CD4-positive, alpha-beta memory T cell (primary cell): ENCODE measurements at regions of chr5 and their contacts with region 1.

Region 1: DNA sequence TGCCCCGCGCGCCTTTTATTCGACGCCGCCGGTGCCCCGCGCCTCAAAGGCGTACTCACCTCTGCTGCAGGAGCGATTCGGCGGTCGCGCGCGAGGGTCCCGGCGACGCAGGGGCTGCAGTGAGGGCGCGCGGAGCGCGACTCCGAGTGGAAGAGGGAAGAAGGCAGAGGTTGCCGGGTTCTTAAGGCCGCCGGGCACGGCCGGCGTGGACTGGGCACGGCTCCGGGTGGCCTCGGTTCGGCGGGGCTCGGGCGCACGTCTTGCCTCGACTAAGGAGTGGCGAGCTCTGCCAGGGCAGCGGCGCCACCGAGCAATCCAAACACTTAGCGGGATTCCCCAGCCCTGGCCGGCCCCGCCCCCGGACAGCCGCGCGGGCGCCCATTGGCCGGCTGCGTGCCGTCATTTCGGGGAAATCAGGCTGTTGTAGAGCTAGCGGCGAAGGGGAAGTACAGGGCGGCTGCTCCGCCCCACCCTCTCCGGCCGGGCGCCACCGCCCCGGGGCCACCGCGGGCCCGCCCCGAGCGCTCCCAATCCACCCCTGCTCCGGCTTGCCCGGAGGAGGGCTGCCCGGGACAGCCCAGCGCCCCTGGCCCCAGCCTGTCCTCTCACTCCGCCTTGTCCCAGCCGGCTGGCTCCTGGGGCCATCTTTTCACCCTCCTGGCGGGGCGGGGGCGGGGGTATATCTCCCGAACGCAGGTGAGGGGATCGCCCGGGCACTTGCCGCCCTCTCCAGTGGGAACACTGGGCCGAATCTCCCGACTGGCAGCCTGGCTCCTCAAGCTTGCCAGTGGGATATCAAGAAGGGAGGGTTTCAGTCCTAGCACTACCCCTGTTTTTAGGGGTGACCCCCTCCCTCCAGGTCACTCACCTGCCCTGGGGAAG is at the start of gene IRF1:
- DNase-seq: peak; percentile 97 to 99 (median 99)
- H3K4me3 ChIP-seq: peak within 1 kb of the TSS; percentile 94 to 96
- H3K4me3 Mint-ChIP-seq: peak within 1 kb of the TSS; percentile 94 to 97 (median 96)
- H3K27ac ChIP-seq: peak within 1 kb of the TSS; percentile 99
- H3K27ac Mint-ChIP-seq: peak within 1 kb of the TSS; percentile 93 to 99 (median 99)
- H3K4me1 ChIP-seq: peaks cover 79% of the 10 kb centered on the region
- H3K4me1 Mint-ChIP-seq: peaks cover 46 to 83% (median 61%) of the 10 kb centered on the region in 4 donors
- H3K27me3 ChIP-seq: no peaks in the 10 kb centered on the region
- H3K27me3 Mint-ChIP-seq: no peaks in the 10 kb centered on the region
- total RNA-seq, gene IRF1: 192 to 202 TPM

Region 2: GRCh38 chr5:132369474-132370180 is 121.1 kb before region 1 on chr5 and contains the start of gene SLC22A5:
- CTCF ChIA-PET with region 1: interaction called, 7 read pairs
- POLR2A ChIA-PET with region 1: interaction called, 30 read pairs
- intact Hi-C with region 1: no loop called
- DNase-seq: peak; percentile 67 to 77 (median 72)
- H3K4me3 ChIP-seq: peak within 1 kb of the TSS; percentile 20 to 72
- H3K4me3 Mint-ChIP-seq: peak within 1 kb of the TSS; percentile 83 to 91 (median 87)
- H3K27ac ChIP-seq: peak within 1 kb of the TSS; percentile 74
- H3K27ac Mint-ChIP-seq: peak within 1 kb of the TSS; percentile 70 to 93 (median 88)
- H3K4me1 ChIP-seq: peaks cover 31% of the 10 kb centered on the region
- H3K4me1 Mint-ChIP-seq: peaks cover 13 to 32% (median 26%) of the 10 kb centered on the region in 4 donors
- H3K27me3 ChIP-seq: no peaks in the 10 kb centered on the region
- H3K27me3 Mint-ChIP-seq: no peaks in the 10 kb centered on the region
- total RNA-seq, gene SLC22A5: 8.9 to 10.0 TPM

Region 3: GRCh38 chr5:132419502-132420468 is 70.9 kb before region 1 on chr5:
- CTCF ChIA-PET with region 1: interaction called, 94 read pairs
- POLR2A ChIA-PET with region 1: interaction called, 565 read pairs
- intact Hi-C with region 1: loop called (anchors 1 kb)
- DNase-seq: peak; percentile 57 to 69 (median 64)
- H3K4me3 ChIP-seq: peak overlapping the region; percentile 38 to 51
- H3K4me3 Mint-ChIP-seq: peak overlapping the region; percentile 75 to 93 (median 80)
- H3K27ac ChIP-seq: peak overlapping the region; percentile 71
- H3K27ac Mint-ChIP-seq: peak overlapping the region; percentile 96 to 99 (median 97)
- H3K4me1 ChIP-seq: peaks cover 100% of the 10 kb centered on the region
- H3K4me1 Mint-ChIP-seq: peaks cover 76 to 98% (median 86%) of the 10 kb centered on the region in 4 donors
- H3K27me3 ChIP-seq: no peaks in the 10 kb centered on the region
- H3K27me3 Mint-ChIP-seq: no peaks in the 10 kb centered on the region

Region 4: DNA sequence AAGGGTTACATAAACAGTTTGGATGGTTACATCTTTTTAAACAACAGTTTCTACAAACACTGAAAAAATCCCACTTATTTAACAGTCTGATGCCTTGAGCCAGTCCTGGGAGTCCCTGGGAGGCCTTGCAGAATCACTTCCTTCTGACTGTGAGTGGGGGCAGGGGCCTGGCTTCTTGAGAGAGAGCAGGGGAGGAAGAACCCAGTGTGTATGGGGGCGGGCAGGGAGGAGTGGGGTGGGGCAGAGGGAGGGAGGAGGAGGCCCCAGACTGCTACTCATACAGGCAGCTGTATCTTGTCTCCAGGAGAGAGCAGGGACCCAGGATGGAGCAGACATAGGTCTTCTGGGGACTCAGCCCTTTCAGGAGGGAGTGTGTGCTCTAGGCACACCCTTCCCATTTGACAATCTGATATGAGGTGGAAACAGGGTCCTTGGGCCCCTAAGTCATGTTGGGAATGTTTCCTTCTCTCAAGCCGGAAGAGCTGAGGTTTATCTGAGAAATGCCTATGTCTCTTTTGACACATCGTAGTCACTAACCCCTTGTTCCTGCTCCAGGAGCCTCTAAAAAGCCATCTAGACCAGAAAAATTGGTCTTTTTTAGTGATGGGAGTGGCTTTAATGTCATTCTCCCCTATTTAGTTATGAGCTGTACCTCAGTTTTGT is 53.0 kb before region 1 on chr5:
- CTCF ChIA-PET with region 1: interaction called, 8 read pairs
- POLR2A ChIA-PET with region 1: interaction called, 565 read pairs
- intact Hi-C with region 1: no loop called
- DNase-seq: peak; percentile 49 to 75 (median 52)
- H3K4me3 ChIP-seq: peak overlapping the region; percentile 4 to 8
- H3K4me3 Mint-ChIP-seq: peak overlapping the region; percentile 52 to 85 (median 70)
- H3K27ac ChIP-seq: peak overlapping the region; percentile 60
- H3K27ac Mint-ChIP-seq: peak overlapping the region; percentile 89 to 96 (median 92)
- H3K4me1 ChIP-seq: peaks cover 99% of the 10 kb centered on the region
- H3K4me1 Mint-ChIP-seq: peaks cover 64 to 97% (median 83%) of the 10 kb centered on the region in 4 donors
- H3K27me3 ChIP-seq: no peaks in the 10 kb centered on the region
- H3K27me3 Mint-ChIP-seq: no peaks in the 10 kb centered on the region

Region 5: DNA sequence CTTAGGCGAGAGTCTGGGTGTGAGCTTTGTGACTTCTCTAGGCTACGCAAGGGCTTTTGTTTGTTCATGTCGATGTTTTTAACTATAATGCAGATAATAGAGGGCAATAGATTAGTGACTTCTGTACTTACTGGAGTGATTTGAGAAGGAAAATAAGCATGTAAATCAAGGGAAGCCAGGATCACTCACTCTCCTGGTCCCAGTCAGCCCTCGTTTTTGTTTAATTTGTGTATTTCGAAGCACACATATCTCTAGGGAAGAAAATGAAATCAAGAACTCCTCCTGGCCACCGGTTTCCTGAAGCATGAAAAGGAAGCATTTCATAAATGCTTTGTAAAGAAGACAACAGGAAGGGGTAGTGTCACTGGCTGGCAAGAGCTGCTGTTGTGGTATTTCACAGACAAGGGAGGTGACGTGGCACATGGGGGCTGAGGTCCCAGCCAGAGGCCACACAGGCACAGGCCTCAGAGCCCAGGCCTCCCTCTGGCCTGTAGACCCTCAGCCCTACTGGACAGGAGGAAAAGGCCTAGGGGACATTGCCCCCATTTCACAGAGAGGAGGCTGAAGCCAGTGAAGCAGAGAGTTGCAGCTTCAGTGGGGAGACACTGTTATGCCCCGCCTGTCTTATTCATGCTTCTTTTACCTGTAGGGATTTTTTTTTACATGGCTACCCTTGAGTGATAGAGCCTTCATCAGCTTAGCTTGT is 34.3 kb before region 1 on chr5:
- CTCF ChIA-PET with region 1: interaction called, 90 read pairs
- POLR2A ChIA-PET with region 1: interaction called, 1,580 read pairs
- intact Hi-C with region 1: loop called (anchors 1 kb)
- DNase-seq: peak; percentile 76 to 87 (median 79)
- H3K4me3 ChIP-seq: peak overlapping the region; percentile 41 to 48
- H3K4me3 Mint-ChIP-seq: peak overlapping the region; percentile 73 to 89 (median 82)
- H3K27ac ChIP-seq: peak overlapping the region; percentile 77
- H3K27ac Mint-ChIP-seq: peak overlapping the region; percentile 97 to 100 (median 100)
- H3K4me1 ChIP-seq: peaks cover 100% of the 10 kb centered on the region
- H3K4me1 Mint-ChIP-seq: peaks cover 82 to 95% (median 90%) of the 10 kb centered on the region in 4 donors
- H3K27me3 ChIP-seq: no peaks in the 10 kb centered on the region
- H3K27me3 Mint-ChIP-seq: no peaks in the 10 kb centered on the region

Region 6: GRCh38 chr5:132473019-132473531 is 17.7 kb before region 1 on chr5:
- CTCF ChIA-PET with region 1: interaction called, 92 read pairs
- POLR2A ChIA-PET with region 1: interaction called, 1,580 read pairs
- intact Hi-C with region 1: no loop called
- DNase-seq: peak; percentile 90 to 96 (median 95)
- H3K4me3 ChIP-seq: no peak overlapping the region
- H3K4me3 Mint-ChIP-seq: peak overlapping the region; percentile 27 to 86 (median 68)
- H3K27ac ChIP-seq: peak overlapping the region; percentile 65
- H3K27ac Mint-ChIP-seq: peak overlapping the region; percentile 91 to 99 (median 97)
- H3K4me1 ChIP-seq: peaks cover 97% of the 10 kb centered on the region
- H3K4me1 Mint-ChIP-seq: peaks cover 60 to 96% (median 79%) of the 10 kb centered on the region in 4 donors
- H3K27me3 ChIP-seq: no peaks in the 10 kb centered on the region
- H3K27me3 Mint-ChIP-seq: peaks cover 0 to 5% of the 10 kb centered on the region in 2 donors

Region 7: DNA sequence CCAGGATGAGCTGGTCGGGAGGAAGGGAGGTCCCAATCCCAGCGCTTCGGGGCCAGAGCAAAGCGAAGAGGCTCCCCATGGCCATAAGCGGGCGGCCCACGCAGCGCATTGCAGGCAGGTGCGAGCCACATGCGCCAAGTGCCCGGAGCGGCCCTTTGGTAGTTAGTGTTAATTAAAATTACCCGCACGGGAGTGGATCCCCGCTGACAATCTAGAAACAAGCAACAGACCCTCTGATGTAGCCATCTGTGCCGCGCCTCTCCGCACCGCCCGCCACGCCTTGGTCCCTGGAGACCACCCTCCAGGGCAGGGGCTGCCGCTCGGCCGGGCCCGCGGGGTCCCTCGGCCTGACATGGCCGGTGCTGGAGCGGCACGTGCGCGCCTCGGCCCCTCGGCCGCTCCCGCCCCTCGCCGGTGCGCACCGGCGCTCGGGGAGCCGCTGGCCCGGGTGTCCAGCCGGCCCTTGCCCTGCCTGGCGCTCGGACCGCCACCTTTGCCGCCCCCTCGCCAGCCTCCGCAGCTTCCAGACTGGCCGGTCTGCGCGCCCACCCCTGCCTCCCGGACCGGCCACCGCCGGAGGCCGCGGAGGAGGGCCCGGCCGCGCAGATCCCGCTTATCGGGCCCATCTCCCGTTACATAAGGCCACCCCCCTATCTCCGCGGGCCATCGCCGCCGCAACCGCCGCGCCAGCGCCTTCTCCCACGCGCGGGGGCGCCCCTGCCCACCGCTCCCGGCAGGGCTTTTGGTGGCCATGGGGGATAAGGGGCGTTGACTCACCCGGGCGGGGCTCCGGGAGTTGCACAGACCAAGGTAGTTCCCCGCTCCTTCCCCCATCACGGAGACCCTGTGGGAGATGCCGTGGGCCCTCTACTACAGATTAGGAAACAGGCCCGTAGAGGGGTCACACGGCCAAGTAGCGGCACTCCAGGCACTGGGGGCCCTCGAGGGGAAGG is 165.4 kb after region 1 on chr5:
- CTCF ChIA-PET with region 1: no interaction called
- POLR2A ChIA-PET with region 1: no interaction called
- intact Hi-C with region 1: no loop called
- DNase-seq: peak in 2 of 5 donors; percentile 26 to 50
- H3K4me3 ChIP-seq: peak overlapping the region in 1 of 2 donors; percentile 19
- H3K4me3 Mint-ChIP-seq: peak overlapping the region in 7 of 8 donors; percentile 39 to 72 (median 57)
- H3K27ac ChIP-seq: no peak overlapping the region
- H3K27ac Mint-ChIP-seq: peak overlapping the region in 1 of 7 donors; percentile 60
- H3K4me1 ChIP-seq: peaks cover 10% of the 10 kb centered on the region
- H3K4me1 Mint-ChIP-seq: peaks cover 5 to 22% (median 6%) of the 10 kb centered on the region in 4 donors
- H3K27me3 ChIP-seq: peaks cover 7% of the 10 kb centered on the region
- H3K27me3 Mint-ChIP-seq: peaks cover 14 to 15% of the 10 kb centered on the region in 2 donors